Left colon (tissue), 2 donors: ENCODE measurements at regions of chr7 and their contacts with region 1.

Region 1: GRCh38 chr7:46776790-46777189 is 805.1 kb downstream of the TNS3 start:
- DNase-seq: no peak
- ATAC-seq: no peak

Region 2: DNA sequence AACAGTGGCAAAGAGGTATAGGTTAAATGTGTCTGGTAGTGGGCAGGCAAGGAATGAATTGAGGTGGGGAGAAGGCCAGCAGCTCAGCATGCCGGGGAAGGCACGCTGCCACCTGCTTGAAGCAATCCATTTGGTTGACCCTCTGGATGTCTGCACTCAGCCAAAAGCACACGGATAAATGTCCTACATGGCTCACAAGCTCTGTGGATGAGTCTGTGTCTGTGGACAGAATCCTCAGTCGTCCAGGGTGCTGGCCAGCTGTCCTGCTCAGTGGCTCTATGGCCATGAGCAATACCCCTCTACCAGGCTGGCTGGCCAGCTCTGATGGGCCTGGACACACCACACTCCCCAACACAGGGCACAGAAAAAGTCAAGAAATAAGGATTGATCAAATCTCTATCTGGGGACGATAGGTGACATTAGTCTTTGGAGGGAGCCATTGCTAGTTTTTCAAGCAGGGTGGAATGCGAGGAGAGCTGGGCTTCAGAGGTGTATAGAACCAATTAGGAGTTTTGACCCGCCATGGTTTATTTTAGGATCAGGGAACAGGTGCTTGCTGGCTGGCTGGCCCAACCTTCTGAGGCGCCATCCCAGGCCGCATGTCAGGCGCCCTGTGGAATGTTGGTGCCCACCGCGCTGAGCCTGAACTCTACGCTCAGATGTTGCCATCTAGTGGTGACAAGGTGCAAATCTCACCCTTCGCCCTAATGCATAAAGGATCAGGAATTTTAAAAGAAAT is 311.7 kb after region 1 on chr7:
- intact Hi-C with region 1: loop called in 1 of 2 experiments (anchors 10 kb)
- DNase-seq: peak in 1 of 2 donors; percentile 45
- ATAC-seq: peak; percentile 59